SK-N-SH (cell line): ENCODE measurements at regions of chr9 and their contacts with region 1.

Region 1: GRCh38 chr9:133042676-133043075 is 11.9 kb downstream of the GTF3C5 start:
- DNase-seq: no peak
- H3K4me3 ChIP-seq: no peak overlapping the region
- H3K27ac ChIP-seq: no peak overlapping the region
- H3K4me1 ChIP-seq: no peaks in the 10 kb centered on the region
- H3K27me3 ChIP-seq: no peaks in the 10 kb centered on the region
- CTCF ChIP-seq: no peak
- EP300 ChIP-seq: no peak
- RAD21 ChIP-seq: no peak

Region 2: GRCh38 chr9:132806723-132807421 is 235.8 kb before region 1 on chr9:
- CTCF ChIA-PET with region 1: no interaction called
- POLR2A ChIA-PET with region 1: no interaction called
- DNase-seq: no peak
- H3K4me3 ChIP-seq: no peak overlapping the region
- H3K27ac ChIP-seq: no peak overlapping the region
- H3K4me1 ChIP-seq: peaks cover 0 to 3% of the 10 kb centered on the region in 2 experiments; a peak in 1 of 4 replicates
- H3K27me3 ChIP-seq: no peaks in the 10 kb centered on the region; the same call in 1 of the 2 replicates
- CTCF ChIP-seq: no peak
- EP300 ChIP-seq: no peak
- RAD21 ChIP-seq: no peak

Region 3: GRCh38 chr9:133014696-133015095 is 28.0 kb before region 1 on chr9:
- CTCF ChIA-PET with region 1: no interaction called
- POLR2A ChIA-PET with region 1: no interaction called
- DNase-seq: no peak
- H3K4me3 ChIP-seq: no peak overlapping the region
- H3K27ac ChIP-seq: no peak overlapping the region
- H3K4me1 ChIP-seq: no peaks in the 10 kb centered on the region
- H3K27me3 ChIP-seq: no peaks in the 10 kb centered on the region; the same call in 1 of the 2 replicates
- CTCF ChIP-seq: no peak
- EP300 ChIP-seq: no peak
- RAD21 ChIP-seq: no peak

Region 4: DNA sequence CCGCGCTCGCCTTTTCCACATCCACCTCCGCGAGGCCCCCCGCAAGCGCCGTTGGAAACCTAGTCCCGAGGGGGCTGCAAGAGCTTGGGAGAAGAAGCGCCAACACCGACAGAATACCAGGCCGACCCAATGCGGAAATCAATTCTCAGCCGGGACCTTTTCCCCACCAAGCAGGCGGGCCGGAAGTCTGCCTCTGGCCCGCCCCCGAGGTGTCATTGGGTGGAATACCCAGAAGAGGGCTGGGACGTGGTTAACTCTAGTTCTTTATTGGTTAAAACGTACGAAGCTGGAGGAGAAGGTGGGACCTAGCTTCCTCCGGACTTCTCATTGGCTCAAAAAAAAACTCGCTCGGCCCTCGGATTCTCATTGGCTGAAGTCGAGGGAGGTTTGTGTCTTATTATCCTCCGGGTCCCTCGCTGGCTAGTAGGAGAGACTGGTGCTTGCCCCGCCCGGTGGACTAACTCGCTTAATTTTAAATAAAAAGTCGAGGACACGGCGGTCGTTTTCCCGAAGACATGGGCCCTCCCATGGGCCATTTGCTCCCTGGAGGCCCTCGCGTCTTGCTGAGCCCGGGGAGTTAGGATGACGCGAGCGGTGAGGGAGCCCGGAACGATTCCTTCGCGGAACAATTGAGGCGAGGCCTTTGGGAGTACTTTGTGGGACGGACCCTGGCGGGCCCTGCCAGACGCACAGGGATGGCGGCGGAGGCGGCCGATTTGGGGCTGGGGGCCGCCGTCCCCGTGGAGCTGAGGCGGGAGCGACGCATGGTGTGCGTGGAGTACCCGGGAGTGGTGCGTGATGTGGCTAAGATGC is 12.2 kb before region 1 on chr9 and contains the start of gene GTF3C5:
- CTCF ChIA-PET with region 1: interaction called, 26 read pairs
- POLR2A ChIA-PET with region 1: interaction called, 7 read pairs
- DNase-seq: peak; percentile 98
- H3K4me3 ChIP-seq: peak within 1 kb of the TSS; percentile 89 to 97
- H3K27ac ChIP-seq: peak within 1 kb of the TSS; percentile 82 to 96
- H3K4me1 ChIP-seq: peaks cover 10 to 13% of the 10 kb centered on the region in 2 experiments; a peak in 2 of 4 replicates
- H3K27me3 ChIP-seq: no peaks in the 10 kb centered on the region
- CTCF ChIP-seq: no peak
- EP300 ChIP-seq: no peak
- RAD21 ChIP-seq: no peak
- polyA plus RNA-seq, gene GTF3C5: 57.3 and 59.1 TPM in 2 replicates